ENCODE measurements at regions of chr17 and their contacts with region 1.

Region 1: GRCh38 chr17:42536048-42536371 is at the start of gene NAGLU:
- DNase-seq: peak in 1 of 2 experiments; percentile 93
- H3K4me3 ChIP-seq: peak within 1 kb of the TSS; percentile 50 to 72 (median 62)
- H3K27ac ChIP-seq: peak within 1 kb of the TSS; percentile 66
- H3K4me1 ChIP-seq: peaks cover 0 to 15% (median 13%) of the 10 kb centered on the region in 4 experiments; a peak in 6 of 7 replicates
- H3K27me3 ChIP-seq: peaks cover 0 to 6% (median 0%) of the 10 kb centered on the region in 4 experiments; a peak in 2 of 7 replicates
- CTCF ChIP-seq: no peak
- EP300 ChIP-seq: no peak
- POLR2A ChIP-seq: no peak
- RAD21 ChIP-seq: no peak
- total RNA-seq, gene NAGLU: 19.4 and 21.3 TPM in 2 replicates

Region 2: DNA sequence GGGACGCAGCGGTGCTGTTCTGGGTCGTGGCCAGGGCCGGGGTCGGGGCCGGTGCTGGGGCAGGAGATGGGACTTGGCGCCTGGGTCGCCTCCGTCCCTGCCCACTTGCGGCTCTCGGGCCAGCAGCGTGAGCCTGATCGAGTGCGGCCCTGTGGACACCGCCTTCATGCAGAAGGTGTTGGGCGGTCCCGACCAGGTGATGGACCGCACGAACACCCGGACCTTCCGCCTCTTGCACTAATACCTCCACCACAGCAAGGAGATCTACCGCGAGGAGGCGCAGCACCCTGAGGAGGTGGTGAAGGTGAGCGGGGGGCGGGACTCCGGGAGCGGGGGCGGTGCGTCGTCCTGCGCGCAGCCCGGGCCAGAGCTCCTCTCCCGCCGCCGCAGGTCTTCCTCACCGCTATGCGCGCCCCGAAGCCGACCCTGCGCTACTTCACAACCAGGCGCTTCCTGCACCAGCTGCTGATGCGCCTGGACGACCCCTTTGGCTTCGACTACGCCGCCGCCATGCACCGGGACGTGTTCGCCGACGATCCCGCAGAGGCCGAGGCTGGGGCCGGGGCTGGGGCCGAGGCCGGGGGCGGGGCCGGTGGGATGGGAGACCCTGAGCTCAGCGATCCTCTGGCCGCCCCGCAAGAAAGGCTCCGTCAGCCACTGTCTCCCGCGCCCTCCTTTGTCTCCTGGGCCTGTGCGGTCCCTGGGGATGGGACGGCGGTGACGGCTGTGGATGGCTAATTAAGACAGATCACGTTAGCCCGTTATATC is 12.2 kb after region 1 on chr17:
- CTCF ChIA-PET with region 1: interaction called, 28 read pairs
- POLR2A ChIA-PET with region 1: interaction called, 43 read pairs
- DNase-seq: peak; percentile 82 to 97
- H3K4me3 ChIP-seq: peak overlapping the region; percentile 31 to 61 (median 37)
- H3K27ac ChIP-seq: no peak overlapping the region
- H3K4me1 ChIP-seq: peaks cover 0 to 8% (median 7%) of the 10 kb centered on the region in 4 experiments; a peak in 5 of 7 replicates
- H3K27me3 ChIP-seq: no peaks in the 10 kb centered on the region
- CTCF ChIP-seq: peak; percentile 75 to 89 (median 77)
- EP300 ChIP-seq: no peak
- POLR2A ChIP-seq: peak; percentile 57 to 62; a peak in 2 of 3 replicates
- RAD21 ChIP-seq: peak; percentile 36 to 48

Region 3: GRCh38 chr17:42554250-42555121 is 18.5 kb after region 1 on chr17:
- CTCF ChIA-PET with region 1: interaction called, 28 read pairs
- POLR2A ChIA-PET with region 1: interaction called, 16 read pairs
- DNase-seq: peak in 1 of 2 experiments; percentile 95
- H3K4me3 ChIP-seq: peak overlapping the region; percentile 61 to 84 (median 71)
- H3K27ac ChIP-seq: peak overlapping the region; percentile 53; the same call in 1 of the 2 replicates
- H3K4me1 ChIP-seq: peaks cover 0 to 9% (median 6%) of the 10 kb centered on the region in 4 experiments; a peak in 6 of 7 replicates
- H3K27me3 ChIP-seq: no peaks in the 10 kb centered on the region; a peak in 1 of 7 replicates
- CTCF ChIP-seq: no peak
- EP300 ChIP-seq: no peak
- POLR2A ChIP-seq: peak in 1 of 2 experiments; percentile 70; a peak in 2 of 3 replicates
- RAD21 ChIP-seq: no peak

Measured in H1 (cell line).